Caco-2 (cell line): ENCODE measurements at regions of chr5 and their contacts with region 1.

Region 1: GRCh38 chr5:151499501-151500035 is 52.2 kb downstream of the SLC36A1 start:
- DNase-seq: no peak
- H3K4me3 ChIP-seq: no peak overlapping the region
- H3K4me3 Mint-ChIP-seq: no peak overlapping the region
- H3K27ac Mint-ChIP-seq: no peak overlapping the region
- H3K4me1 ChIP-seq: no peaks in the 10 kb centered on the region
- H3K4me1 Mint-ChIP-seq: no peaks in the 10 kb centered on the region
- H3K27me3 ChIP-seq: no peaks in the 10 kb centered on the region
- H3K27me3 Mint-ChIP-seq: no peaks in the 10 kb centered on the region
- CTCF ChIP-seq: no peak

Region 2: GRCh38 chr5:151315998-151316597 is 183.5 kb before region 1 on chr5:
- CTCF ChIA-PET with region 1: no interaction called
- POLR2A ChIA-PET with region 1: no interaction called
- intact Hi-C with region 1: loop called (anchors 1 kb)
- DNase-seq: peak; percentile 74 to 81
- H3K4me3 ChIP-seq: no peak overlapping the region
- H3K4me3 Mint-ChIP-seq: no peak overlapping the region
- H3K27ac Mint-ChIP-seq: no peak overlapping the region
- H3K4me1 ChIP-seq: peaks cover 8% of the 10 kb centered on the region; the same call in 1 of the 2 replicates
- H3K4me1 Mint-ChIP-seq: peaks cover 13% of the 10 kb centered on the region
- H3K27me3 ChIP-seq: no peaks in the 10 kb centered on the region
- H3K27me3 Mint-ChIP-seq: no peaks in the 10 kb centered on the region
- CTCF ChIP-seq: peak; percentile 89 to 92

Region 3: DNA sequence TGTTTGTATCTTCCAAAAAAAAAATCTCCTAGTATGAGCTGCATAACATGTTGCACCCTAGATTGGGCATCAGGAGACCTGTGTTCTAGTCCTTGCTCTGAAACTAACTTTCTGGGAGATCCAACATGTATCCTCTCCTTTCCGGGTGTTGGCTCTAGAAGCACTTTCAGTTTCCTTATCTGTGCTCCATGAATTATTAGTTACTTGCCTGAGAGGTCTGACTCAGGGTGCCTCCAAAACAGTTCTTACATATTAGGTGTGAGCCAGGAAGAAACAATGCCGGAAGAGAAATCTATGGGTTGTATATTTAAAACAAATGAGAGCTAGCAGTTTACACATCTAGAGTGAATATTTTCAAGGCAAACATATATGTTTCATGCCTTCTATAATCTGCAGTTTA is 115.5 kb before region 1 on chr5:
- CTCF ChIA-PET with region 1: no interaction called
- POLR2A ChIA-PET with region 1: no interaction called
- intact Hi-C with region 1: loop called (anchors 1 kb)
- DNase-seq: no peak
- H3K4me3 ChIP-seq: no peak overlapping the region
- H3K4me3 Mint-ChIP-seq: no peak overlapping the region
- H3K27ac Mint-ChIP-seq: no peak overlapping the region
- H3K4me1 ChIP-seq: no peaks in the 10 kb centered on the region
- H3K4me1 Mint-ChIP-seq: peaks cover 11% of the 10 kb centered on the region
- H3K27me3 ChIP-seq: no peaks in the 10 kb centered on the region
- H3K27me3 Mint-ChIP-seq: no peaks in the 10 kb centered on the region
- CTCF ChIP-seq: no peak

Region 4: GRCh38 chr5:151470439-151470838 is 29.1 kb before region 1 on chr5:
- CTCF ChIA-PET with region 1: no interaction called
- POLR2A ChIA-PET with region 1: no interaction called
- intact Hi-C with region 1: loop called (anchors 2 kb)
- DNase-seq: no peak
- H3K4me3 ChIP-seq: no peak overlapping the region
- H3K4me3 Mint-ChIP-seq: no peak overlapping the region
- H3K27ac Mint-ChIP-seq: no peak overlapping the region
- H3K4me1 ChIP-seq: no peaks in the 10 kb centered on the region
- H3K4me1 Mint-ChIP-seq: no peaks in the 10 kb centered on the region
- H3K27me3 ChIP-seq: no peaks in the 10 kb centered on the region
- H3K27me3 Mint-ChIP-seq: no peaks in the 10 kb centered on the region
- CTCF ChIP-seq: no peak

Region 5: GRCh38 chr5:151523335-151523734 is 23.8 kb after region 1 on chr5:
- CTCF ChIA-PET with region 1: no interaction called
- POLR2A ChIA-PET with region 1: no interaction called
- intact Hi-C with region 1: loop called (anchors 1 kb)
- DNase-seq: peak; percentile 55 to 59
- H3K4me3 ChIP-seq: no peak overlapping the region
- H3K4me3 Mint-ChIP-seq: no peak overlapping the region
- H3K27ac Mint-ChIP-seq: no peak overlapping the region
- H3K4me1 ChIP-seq: no peaks in the 10 kb centered on the region
- H3K4me1 Mint-ChIP-seq: no peaks in the 10 kb centered on the region
- H3K27me3 ChIP-seq: no peaks in the 10 kb centered on the region
- H3K27me3 Mint-ChIP-seq: no peaks in the 10 kb centered on the region
- CTCF ChIP-seq: peak; percentile 67 to 71

Region 6: DNA sequence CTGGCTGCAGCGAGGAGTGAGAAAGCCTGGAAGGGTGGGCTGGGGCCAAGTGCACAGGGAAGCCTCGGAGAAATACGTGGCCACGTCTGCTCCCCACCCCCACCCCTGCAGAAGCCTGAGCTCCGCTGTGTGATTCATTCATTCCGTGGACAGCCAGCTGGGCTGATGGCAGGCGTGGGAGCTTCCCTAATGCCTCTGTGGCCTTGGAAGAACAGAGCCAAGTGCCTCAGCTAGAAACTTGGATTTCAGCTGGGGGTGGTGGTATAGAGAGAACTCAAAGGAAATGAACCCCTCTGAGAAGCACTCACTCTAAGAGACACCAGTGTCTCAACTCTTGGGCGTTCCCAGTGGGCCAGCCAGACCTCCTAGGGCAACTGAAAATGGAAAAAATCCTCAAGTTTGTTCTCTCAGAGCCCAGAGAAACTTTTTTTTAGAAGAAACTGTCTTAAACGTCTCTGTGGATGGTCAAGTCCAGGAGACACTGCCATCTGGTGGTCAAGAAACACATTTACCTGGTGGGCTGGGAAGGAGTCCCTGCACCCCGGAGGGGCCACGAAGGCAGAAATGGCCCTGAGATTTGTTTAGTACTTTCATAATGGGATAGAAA is 240.9 kb after region 1 on chr5:
- CTCF ChIA-PET with region 1: no interaction called
- POLR2A ChIA-PET with region 1: no interaction called
- intact Hi-C with region 1: loop called (anchors 5 kb)
- DNase-seq: peak; percentile 62 to 70
- H3K4me3 ChIP-seq: no peak overlapping the region
- H3K4me3 Mint-ChIP-seq: no peak overlapping the region
- H3K27ac Mint-ChIP-seq: peak overlapping the region; percentile 51
- H3K4me1 ChIP-seq: peaks cover 15% of the 10 kb centered on the region
- H3K4me1 Mint-ChIP-seq: peaks cover 16% of the 10 kb centered on the region
- H3K27me3 ChIP-seq: no peaks in the 10 kb centered on the region
- H3K27me3 Mint-ChIP-seq: no peaks in the 10 kb centered on the region
- CTCF ChIP-seq: peak; percentile 82 to 94